ENCODE measurements at regions of chr2 and their contacts with region 1.

Region 1: DNA sequence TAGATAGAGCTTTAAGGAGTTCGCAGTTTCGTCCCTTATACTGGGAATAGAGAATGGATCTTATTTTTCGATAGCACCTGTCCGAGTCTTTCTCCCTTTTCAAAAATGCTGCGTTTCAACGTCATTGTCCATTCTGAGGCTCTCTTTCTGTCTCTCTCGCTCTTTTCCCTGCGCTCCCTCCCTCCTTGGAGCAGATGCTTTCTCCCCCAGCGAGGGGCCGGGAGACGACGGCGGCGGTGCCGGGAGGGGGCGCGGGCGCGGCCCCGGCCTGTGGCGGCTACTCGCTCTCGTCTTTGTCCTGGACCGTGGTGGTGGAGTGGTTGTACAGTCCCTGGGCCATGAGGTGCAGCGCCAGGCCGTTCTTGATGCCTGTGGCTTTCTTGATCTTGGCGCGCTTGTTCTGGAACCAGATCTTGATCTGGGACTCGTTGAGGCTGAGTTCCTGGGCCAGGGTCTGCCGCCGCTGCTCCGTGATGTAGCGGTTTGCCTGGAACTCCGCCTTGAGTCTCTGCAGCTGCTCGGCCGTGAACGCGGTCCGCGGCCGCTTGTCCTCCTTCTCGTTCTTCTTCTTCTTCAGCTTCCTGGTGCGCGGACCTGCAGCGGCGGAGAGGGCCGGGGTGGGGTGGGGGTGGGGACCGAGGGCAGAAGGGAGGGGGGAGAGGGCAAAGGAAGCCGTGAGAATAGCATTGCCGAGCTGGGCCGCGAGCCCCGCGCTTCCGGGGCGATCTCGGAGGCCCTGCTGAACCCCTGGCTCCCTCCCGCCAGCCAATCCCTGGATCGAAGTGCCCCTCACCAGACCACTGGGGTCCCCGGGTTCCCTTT is 4.6 kb downstream of the EN1 start:
- DNase-seq: no peak
- H3K4me3 ChIP-seq: no peak overlapping the region
- H3K27ac ChIP-seq: no peak overlapping the region
- H3K4me1 ChIP-seq: peaks cover 5% of the 10 kb centered on the region
- H3K27me3 ChIP-seq: no peaks in the 10 kb centered on the region
- CTCF ChIP-seq: no peak
- EP300 ChIP-seq: no peak
- POLR2A ChIP-seq: no peak

Region 2: DNA sequence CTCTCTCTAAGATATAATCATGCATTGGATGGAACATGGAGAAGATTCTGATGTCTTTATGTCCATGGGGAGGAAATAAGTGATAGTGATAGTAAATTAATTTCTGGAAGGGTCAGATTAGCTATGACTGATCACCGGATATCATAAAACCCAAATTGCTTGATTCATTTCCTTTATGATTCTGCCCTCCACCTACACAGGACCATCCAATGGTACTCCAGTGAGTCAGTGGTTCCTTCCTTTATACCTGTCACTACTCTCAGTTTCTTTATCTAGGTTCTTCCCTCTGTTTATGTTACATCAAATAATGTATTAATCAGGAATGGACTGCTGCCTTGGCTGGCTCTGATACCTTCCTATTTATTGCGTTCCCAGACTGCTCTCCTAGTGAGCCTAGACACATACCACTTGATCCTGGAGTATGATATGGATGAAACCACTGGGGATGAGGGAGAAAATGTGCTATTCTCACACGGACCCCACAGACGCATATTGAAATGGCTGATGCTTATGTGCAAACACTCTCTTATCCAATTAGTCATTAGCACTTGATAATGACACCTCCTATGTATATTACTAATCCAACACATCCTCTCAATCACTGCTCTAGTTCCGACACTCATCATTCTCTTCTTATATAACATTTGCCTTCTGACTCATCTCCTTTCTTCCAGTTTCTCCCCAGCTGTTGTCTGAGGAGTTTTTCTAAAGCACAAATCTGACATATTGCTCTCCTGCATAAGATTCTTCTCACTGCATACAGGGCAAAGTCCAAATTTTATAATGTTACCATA is 439.0 kb before region 1 on chr2:
- intact Hi-C with region 1: loop called in 1 of 4 experiments (anchors 5 kb)
- DNase-seq: no peak
- H3K4me3 ChIP-seq: no peak overlapping the region
- H3K27ac ChIP-seq: no peak overlapping the region
- H3K4me1 ChIP-seq: no peaks in the 10 kb centered on the region
- H3K27me3 ChIP-seq: no peaks in the 10 kb centered on the region
- CTCF ChIP-seq: no peak
- EP300 ChIP-seq: no peak
- POLR2A ChIP-seq: no peak

Region 3: DNA sequence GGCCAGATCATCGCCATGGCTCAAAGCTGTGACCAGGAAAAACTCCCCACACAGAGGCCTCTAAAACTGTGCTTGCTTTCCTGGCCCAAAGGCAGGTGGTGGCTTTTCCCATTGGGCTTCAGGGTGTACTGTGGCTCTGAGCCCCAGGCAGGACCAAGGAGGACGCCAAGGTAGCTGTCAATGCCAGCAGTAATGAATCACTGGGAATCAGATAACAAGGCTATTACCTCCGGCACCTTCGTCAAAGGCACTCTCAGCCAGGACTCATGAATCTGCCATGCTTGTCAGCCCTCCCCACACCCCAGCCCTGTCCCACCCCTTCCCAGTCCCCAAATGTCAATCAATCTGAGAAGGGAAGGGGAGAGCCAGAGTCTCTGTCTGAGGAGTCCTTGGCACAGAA is 32.4 kb after region 1 on chr2:
- intact Hi-C with region 1: no loop called
- DNase-seq: no peak
- H3K4me3 ChIP-seq: no peak overlapping the region
- H3K27ac ChIP-seq: no peak overlapping the region
- H3K4me1 ChIP-seq: no peaks in the 10 kb centered on the region
- H3K27me3 ChIP-seq: no peaks in the 10 kb centered on the region
- CTCF ChIP-seq: no peak
- EP300 ChIP-seq: no peak
- POLR2A ChIP-seq: no peak

Region 4: DNA sequence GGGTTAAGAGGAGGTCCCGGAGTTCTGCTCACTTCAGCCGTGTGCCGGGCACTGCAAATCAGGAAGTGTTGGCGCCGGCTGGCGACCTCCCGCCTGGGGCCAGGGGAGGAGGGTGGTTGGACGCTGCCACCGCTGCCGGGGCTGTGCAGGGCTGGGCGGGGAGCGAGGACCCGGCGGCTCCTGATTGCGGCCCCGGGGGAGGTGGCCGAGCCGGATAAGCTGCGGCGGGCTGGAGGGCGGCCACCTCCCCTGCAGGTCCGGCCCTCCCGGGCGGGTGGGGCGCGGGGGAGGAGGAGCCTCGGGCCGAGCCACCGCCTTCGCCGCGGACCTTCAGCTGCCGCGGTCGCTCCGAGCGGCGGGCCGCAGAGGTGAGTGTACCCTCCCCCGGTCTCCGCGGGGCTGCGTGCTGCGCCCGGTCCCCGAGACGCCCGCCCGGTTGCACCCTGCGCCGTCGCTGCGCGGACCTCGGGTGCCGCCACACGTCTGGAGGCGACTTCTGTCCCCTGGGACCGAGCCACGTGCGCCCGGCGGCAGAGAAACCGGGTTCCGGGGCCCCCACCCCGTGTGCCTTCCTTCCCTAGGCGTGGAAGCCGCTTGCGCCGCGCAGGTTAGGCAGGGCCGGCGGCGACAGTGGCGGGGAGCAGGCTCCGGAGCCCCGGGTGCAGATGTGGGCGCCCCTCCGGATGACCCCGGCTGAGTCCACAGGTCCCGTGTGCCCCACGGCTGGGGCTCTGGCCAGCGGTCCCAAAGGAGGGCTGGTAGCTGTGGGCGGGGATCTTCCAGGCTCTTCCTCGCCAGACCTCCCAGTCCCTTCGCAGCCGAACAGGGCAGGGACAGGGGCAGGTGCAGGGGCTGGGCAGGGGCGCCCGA is 380.9 kb after region 1 on chr2 and contains the start of gene STEAP3:
- intact Hi-C with region 1: no loop called
- DNase-seq: peak; percentile 59 to 76 (median 65)
- H3K4me3 ChIP-seq: peak within 1 kb of the TSS; percentile 43
- H3K27ac ChIP-seq: peak within 1 kb of the TSS in 1 of 2 donors; percentile 30
- H3K4me1 ChIP-seq: no peaks in the 10 kb centered on the region
- H3K27me3 ChIP-seq: no peaks in the 10 kb centered on the region
- CTCF ChIP-seq: no peak
- EP300 ChIP-seq: no peak
- POLR2A ChIP-seq: no peak
- total RNA-seq, gene STEAP3: 3.8 to 13.3 (median 5.8) TPM

Measured in ovary (tissue), 10 donors.